Activated CD4-positive, alpha-beta T cell treated with anti-CD3 and anti-CD28 coated beads, Interleukin-2, amount 10 ng/mL, durations not matched to agents 24 days and 14 days (primary cell): ENCODE measurements at regions of chr1 and their contacts with region 1.

Region 1: GRCh38 chr1:236394905-236395780 is 1.1 kb downstream of the EDARADD start:
- DNase-seq: peak; percentile 89
- H3K4me3 Mint-ChIP-seq: peak overlapping the region; percentile 96
- H3K27ac Mint-ChIP-seq: peak overlapping the region; percentile 91
- H3K4me1 Mint-ChIP-seq: peaks cover 40% of the 10 kb centered on the region
- H3K27me3 Mint-ChIP-seq: peaks cover 26% of the 10 kb centered on the region

Region 2: GRCh38 chr1:236009857-236010256 is 385.3 kb before region 1 on chr1:
- intact Hi-C with region 1: loop called (anchors 10 kb)
- DNase-seq: no peak
- H3K4me3 Mint-ChIP-seq: no peak overlapping the region
- H3K27ac Mint-ChIP-seq: no peak overlapping the region
- H3K4me1 Mint-ChIP-seq: peaks cover 2% of the 10 kb centered on the region
- H3K27me3 Mint-ChIP-seq: no peaks in the 10 kb centered on the region

Region 3: DNA sequence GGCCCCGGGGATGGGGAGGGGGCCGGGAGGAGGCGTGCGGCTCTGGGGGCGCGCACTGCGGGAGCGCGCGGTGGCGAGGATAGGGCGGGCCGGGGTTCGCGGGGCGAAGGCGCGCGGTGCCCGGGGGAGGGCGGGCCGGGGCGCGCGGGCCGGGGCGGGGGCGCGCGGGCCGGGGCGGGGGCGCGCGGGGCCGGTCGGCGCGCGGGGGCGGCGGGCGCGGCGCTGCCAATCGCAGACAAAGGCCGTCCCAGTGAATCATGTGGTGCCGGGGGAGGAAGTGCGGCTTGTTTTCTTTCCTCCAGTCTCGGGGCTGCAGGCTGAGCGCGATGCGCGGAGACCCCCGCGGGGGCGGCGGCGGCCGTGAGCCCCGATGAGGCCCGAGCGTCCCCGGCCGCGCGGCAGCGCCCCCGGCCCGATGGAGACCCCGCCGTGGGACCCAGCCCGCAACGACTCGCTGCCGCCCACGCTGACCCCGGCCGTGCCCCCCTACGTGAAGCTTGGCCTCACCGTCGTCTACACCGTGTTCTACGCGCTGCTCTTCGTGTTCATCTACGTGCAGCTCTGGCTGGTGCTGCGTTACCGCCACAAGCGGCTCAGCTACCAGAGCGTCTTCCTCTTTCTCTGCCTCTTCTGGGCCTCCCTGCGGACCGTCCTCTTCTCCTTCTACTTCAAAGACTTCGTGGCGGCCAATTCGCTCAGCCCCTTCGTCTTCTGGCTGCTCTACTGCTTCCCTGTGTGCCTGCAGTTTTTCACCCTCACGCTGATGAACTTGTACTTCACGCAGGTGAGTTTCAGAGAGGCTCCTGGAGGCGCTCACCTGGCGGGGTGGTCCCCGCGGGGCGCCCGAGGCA is 252.7 kb before region 1 on chr1 and contains the start of gene GPR137B:
- intact Hi-C with region 1: loop called (anchors 2 kb)
- DNase-seq: peak; percentile 88
- H3K4me3 Mint-ChIP-seq: peak within 1 kb of the TSS; percentile 92
- H3K27ac Mint-ChIP-seq: peak within 1 kb of the TSS; percentile 82
- H3K4me1 Mint-ChIP-seq: peaks cover 28% of the 10 kb centered on the region
- H3K27me3 Mint-ChIP-seq: peaks cover 37% of the 10 kb centered on the region
- total RNA-seq, gene GPR137B: 6.6 and 7.7 TPM in 2 replicates

Region 4: DNA sequence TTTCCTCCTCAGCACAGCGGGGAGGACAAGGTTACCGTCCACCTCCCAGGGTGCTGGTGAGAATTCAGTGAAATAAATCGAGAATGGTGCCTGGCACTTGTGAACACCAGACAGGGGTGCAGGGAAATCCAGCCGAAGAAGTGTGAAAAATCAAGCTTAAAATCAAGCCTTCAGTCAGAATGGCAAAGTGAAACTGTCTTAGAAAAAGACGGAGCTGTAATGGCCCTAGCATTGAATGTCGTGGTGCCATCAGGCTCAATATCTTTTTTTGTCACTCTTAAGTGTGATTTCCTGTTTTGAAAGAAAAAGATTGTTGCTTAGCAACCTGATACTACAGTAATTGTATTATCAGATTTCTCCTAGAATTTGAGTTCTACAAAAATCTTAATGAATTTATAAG is 21.0 kb after region 1 on chr1:
- intact Hi-C with region 1: loop called (anchors 2 kb)
- DNase-seq: peak; percentile 73
- H3K4me3 Mint-ChIP-seq: peak overlapping the region; percentile 59
- H3K27ac Mint-ChIP-seq: peak overlapping the region; percentile 64
- H3K4me1 Mint-ChIP-seq: peaks cover 7% of the 10 kb centered on the region
- H3K27me3 Mint-ChIP-seq: no peaks in the 10 kb centered on the region